Ascending aorta (tissue), 2 donors: ENCODE measurements at regions of chr3 and their contacts with region 1.

Region 1: GRCh38 chr3:190094160-190094718 is 26.5 kb downstream of the P3H2 start:
- DNase-seq: peak; percentile 11 to 87
- H3K4me3 ChIP-seq: no peak overlapping the region
- H3K27ac ChIP-seq: peak overlapping the region; percentile 52 to 69
- H3K4me1 ChIP-seq: peaks cover 4 to 22% of the 10 kb centered on the region in 2 donors
- H3K27me3 ChIP-seq: no peaks in the 10 kb centered on the region
- CTCF ChIP-seq: no peak

Region 2: GRCh38 chr3:190076601-190077396 is 17.4 kb before region 1 on chr3:
- intact Hi-C with region 1: loop called (anchors 1 kb)
- DNase-seq: peak; percentile 27 to 89
- H3K4me3 ChIP-seq: no peak overlapping the region
- H3K27ac ChIP-seq: peak overlapping the region; percentile 77 to 78
- H3K4me1 ChIP-seq: peaks cover 4 to 16% of the 10 kb centered on the region in 2 donors
- H3K27me3 ChIP-seq: no peaks in the 10 kb centered on the region
- CTCF ChIP-seq: no peak